ENCODE measurements at regions of chr15 and their contacts with region 1.

Region 1: GRCh38 chr15:60649845-60650548 is 171.1 kb upstream of the ICE2 start:
- DNase-seq: peak; percentile 74
- H3K4me3 Mint-ChIP-seq: peak overlapping the region; percentile 52
- H3K27ac Mint-ChIP-seq: peak overlapping the region; percentile 88
- H3K4me1 Mint-ChIP-seq: peaks cover 49% of the 10 kb centered on the region
- H3K27me3 Mint-ChIP-seq: no peaks in the 10 kb centered on the region

Region 2: DNA sequence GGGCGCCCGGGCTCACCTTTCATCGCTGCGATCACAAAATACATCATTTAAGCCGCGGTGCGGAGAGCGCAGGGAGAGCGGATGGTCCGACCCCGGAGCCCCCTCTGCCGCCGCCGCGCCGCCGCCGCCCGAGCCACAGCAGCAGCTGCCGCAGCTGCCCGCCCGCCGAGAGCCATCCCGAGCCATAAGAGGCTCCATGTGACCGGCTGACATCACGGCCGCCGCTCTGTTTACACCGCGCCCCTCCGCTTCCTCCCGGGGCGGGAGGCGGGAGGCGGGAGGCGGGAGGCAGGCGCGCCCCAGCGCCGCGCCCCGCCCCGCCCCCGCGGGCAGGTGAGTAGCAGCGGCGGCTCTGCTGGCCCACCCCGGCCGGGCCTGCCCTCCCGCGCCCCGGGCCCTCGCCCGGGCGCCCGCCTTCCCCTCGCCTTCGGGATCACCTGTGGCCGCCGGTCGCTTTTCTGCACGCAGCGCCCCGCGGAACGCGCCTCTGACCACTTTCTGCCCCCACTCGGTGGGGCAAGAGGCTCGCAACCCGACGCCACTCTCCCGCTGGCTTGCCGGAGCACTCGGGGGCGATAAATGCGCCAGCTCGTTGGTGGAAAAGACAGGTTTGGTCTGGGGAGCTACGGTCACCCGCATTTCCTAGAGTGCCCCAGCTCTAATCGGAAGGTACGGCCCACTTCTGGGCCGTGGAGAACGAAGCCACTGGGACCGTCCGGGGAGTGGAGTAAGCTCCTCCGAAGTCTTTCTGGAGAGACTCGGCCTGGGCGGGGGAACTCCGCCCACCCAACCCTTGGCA is 57.4 kb before region 1 on chr15:
- CTCF ChIA-PET with region 1: interaction called, 4 read pairs
- intact Hi-C with region 1: loop called (anchors 1 kb)
- DNase-seq: peak; percentile 89
- H3K4me3 Mint-ChIP-seq: peak overlapping the region; percentile 76
- H3K27ac Mint-ChIP-seq: peak overlapping the region; percentile 67
- H3K4me1 Mint-ChIP-seq: peaks cover 31% of the 10 kb centered on the region
- H3K27me3 Mint-ChIP-seq: no peaks in the 10 kb centered on the region

Region 3: GRCh38 chr15:60695713-60696522 is 45.9 kb after region 1 on chr15:
- CTCF ChIA-PET with region 1: interaction called, 4 read pairs
- intact Hi-C with region 1: loop called (anchors 1 kb)
- DNase-seq: peak; percentile 94
- H3K4me3 Mint-ChIP-seq: peak overlapping the region; percentile 20
- H3K27ac Mint-ChIP-seq: peak overlapping the region; percentile 88
- H3K4me1 Mint-ChIP-seq: peaks cover 80% of the 10 kb centered on the region
- H3K27me3 Mint-ChIP-seq: no peaks in the 10 kb centered on the region

Region 4: GRCh38 chr15:60772395-60773120 is 122.6 kb after region 1 on chr15:
- CTCF ChIA-PET with region 1: no interaction called
- intact Hi-C with region 1: loop called (anchors 1 kb)
- DNase-seq: peak; percentile 32
- H3K4me3 Mint-ChIP-seq: no peak overlapping the region
- H3K27ac Mint-ChIP-seq: peak overlapping the region; percentile 95
- H3K4me1 Mint-ChIP-seq: peaks cover 67% of the 10 kb centered on the region
- H3K27me3 Mint-ChIP-seq: no peaks in the 10 kb centered on the region

Region 5: DNA sequence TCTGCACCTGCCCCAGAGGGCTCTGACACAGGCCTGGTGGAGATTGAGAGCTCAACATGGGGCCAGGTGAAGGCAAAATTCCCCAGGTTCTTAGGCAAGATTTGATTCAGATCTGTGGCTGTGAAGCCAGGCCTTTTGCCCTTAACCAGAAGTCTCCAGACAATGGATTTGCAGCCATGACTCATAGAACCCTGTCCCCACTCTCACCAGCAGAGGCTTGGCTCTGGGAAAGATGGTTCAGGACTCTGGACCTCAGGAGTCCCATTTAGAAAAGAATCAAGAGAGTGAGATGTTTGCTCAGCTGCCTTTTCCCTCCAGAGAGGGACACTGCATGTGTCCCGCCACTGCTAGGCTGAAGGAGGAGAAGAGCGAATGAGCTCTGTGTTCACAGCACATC is 190.3 kb after region 1 on chr15:
- CTCF ChIA-PET with region 1: interaction called, 3 read pairs
- intact Hi-C with region 1: loop called (anchors 1 kb)
- DNase-seq: peak; percentile 53
- H3K4me3 Mint-ChIP-seq: peak overlapping the region; percentile 76
- H3K27ac Mint-ChIP-seq: peak overlapping the region; percentile 84
- H3K4me1 Mint-ChIP-seq: peaks cover 73% of the 10 kb centered on the region
- H3K27me3 Mint-ChIP-seq: no peaks in the 10 kb centered on the region

Region 6: DNA sequence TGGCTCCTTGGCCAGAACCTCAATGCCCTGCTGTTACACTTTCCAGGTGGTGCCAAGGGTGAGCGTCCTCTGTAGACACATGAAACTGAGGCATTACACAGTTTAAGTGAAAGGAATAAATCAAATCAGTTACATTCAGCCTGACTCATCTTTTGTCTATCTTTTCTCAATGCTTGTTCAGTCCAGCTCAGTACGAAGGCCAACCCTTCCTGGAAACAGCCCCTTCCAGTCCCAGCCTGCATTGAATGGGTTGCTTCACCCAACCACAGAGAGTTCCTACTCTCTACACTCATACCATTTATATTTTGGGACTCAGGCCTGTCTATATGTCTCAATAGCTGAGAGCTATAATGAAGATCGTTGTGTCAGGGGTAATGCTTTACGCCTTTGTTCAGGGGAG is 215.5 kb after region 1 on chr15:
- CTCF ChIA-PET with region 1: no interaction called
- intact Hi-C with region 1: loop called (anchors 2 kb)
- DNase-seq: peak; percentile 44
- H3K4me3 Mint-ChIP-seq: no peak overlapping the region
- H3K27ac Mint-ChIP-seq: no peak overlapping the region
- H3K4me1 Mint-ChIP-seq: peaks cover 30% of the 10 kb centered on the region
- H3K27me3 Mint-ChIP-seq: no peaks in the 10 kb centered on the region